K562 (cell line): ENCODE measurements at regions of chrX and their contacts with region 1.

Region 1: GRCh38 chrX:111886678-111887077 is 10.7 kb downstream of the TRPC5OS start:
- DNase-seq: no peak
- ATAC-seq: no peak
- H3K4me3 ChIP-seq: no peak overlapping the region
- H3K27ac ChIP-seq: no peak overlapping the region
- H3K4me1 ChIP-seq: no peaks in the 10 kb centered on the region
- H3K27me3 ChIP-seq: no peaks in the 10 kb centered on the region
- CTCF ChIP-seq: no peak
- EP300 ChIP-seq: no peak
- POLR2A ChIP-seq: no peak
- RAD21 ChIP-seq: no peak

Region 2: DNA sequence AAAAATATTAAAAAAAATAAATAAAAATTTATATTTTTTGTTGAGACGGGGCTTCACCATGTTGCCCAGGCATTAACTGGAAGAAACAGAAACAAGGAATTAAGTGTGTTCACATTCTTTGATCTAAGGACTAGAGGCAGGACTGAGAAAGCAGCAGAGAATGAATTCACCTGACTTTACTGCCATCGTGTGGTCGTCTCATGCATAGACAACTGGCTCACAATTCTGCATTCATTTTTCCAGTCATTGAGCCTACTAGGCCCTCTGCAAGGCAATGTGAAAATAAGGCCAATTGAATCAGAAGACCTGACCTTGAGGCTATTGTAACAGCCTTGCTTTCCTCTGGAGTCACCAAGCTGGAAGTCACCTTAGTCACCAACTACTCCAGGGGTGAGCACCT is 755.7 kb after region 1 on chrX:
- CTCF ChIA-PET with region 1: no interaction called
- POLR2A ChIA-PET with region 1: no interaction called
- in situ Hi-C with region 1: loop called (anchors 25 kb)
- intact Hi-C with region 1: no loop called
- DNase-seq: peak; percentile 17 to 49 (median 24)
- ATAC-seq: peak; percentile 85
- H3K4me3 ChIP-seq: no peak overlapping the region
- H3K27ac ChIP-seq: no peak overlapping the region
- H3K4me1 ChIP-seq: no peaks in the 10 kb centered on the region
- H3K27me3 ChIP-seq: no peaks in the 10 kb centered on the region
- CTCF ChIP-seq: peak; percentile 59 to 68 (median 64)
- EP300 ChIP-seq: no peak
- POLR2A ChIP-seq: no peak
- RAD21 ChIP-seq: peak in 1 of 2 experiments; percentile 62; a peak in 3 of 4 replicates